ENCODE measurements at regions of chr1 and their contacts with region 1.

Region 1: GRCh38 chr1:204041232-204041767 is 31.6 kb upstream of the SOX13 start:
- DNase-seq: peak; percentile 37 to 68
- ATAC-seq: peak; percentile 43 to 77 (median 72)
- H3K4me3 ChIP-seq: peak overlapping the region in 1 of 10 donors; percentile 25
- H3K27ac ChIP-seq: peak overlapping the region; percentile 36 to 85 (median 65)
- H3K4me1 ChIP-seq: peaks cover 7 to 57% (median 34%) of the 10 kb centered on the region in 9 donors
- H3K27me3 ChIP-seq: no peaks in the 10 kb centered on the region
- CTCF ChIP-seq: no peak

Region 2: GRCh38 chr1:203968728-203969127 is 72.6 kb before region 1 on chr1:
- intact Hi-C with region 1: loop called in 1 of 10 experiments (anchors 1 kb)
- DNase-seq: peak in 1 of 2 donors; percentile 57
- ATAC-seq: peak in 7 of 8 donors; percentile 61 to 82 (median 72)
- H3K4me3 ChIP-seq: no peak overlapping the region
- H3K27ac ChIP-seq: peak overlapping the region in 1 of 10 donors; percentile 8
- H3K4me1 ChIP-seq: peaks cover 0 to 20% (median 9%) of the 10 kb centered on the region in 9 donors
- H3K27me3 ChIP-seq: no peaks in the 10 kb centered on the region
- CTCF ChIP-seq: no peak

Region 3: DNA sequence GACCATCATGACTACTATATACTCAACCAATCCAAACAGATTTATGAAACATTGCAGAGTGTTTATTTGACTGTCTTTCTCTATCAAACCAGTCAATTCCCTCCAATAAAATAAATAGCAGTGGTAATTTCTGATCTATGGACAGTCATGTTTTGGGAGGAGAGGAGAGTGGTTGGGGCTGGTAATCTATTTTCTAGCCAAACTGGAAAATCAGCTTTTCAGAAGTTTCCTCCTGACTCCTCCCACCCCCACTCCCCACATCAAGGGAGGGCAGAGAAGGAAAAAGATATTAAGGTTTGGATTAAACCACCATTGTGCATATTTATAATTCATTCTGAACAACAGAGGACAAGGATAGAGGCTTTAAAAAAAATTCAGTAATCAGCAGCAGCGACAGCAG is 37.8 kb before region 1 on chr1:
- intact Hi-C with region 1: loop called in 1 of 10 experiments (anchors 5 kb)
- DNase-seq: no peak
- ATAC-seq: no peak
- H3K4me3 ChIP-seq: no peak overlapping the region
- H3K27ac ChIP-seq: no peak overlapping the region
- H3K4me1 ChIP-seq: no peaks in the 10 kb centered on the region
- H3K27me3 ChIP-seq: no peaks in the 10 kb centered on the region
- CTCF ChIP-seq: no peak

Region 4: DNA sequence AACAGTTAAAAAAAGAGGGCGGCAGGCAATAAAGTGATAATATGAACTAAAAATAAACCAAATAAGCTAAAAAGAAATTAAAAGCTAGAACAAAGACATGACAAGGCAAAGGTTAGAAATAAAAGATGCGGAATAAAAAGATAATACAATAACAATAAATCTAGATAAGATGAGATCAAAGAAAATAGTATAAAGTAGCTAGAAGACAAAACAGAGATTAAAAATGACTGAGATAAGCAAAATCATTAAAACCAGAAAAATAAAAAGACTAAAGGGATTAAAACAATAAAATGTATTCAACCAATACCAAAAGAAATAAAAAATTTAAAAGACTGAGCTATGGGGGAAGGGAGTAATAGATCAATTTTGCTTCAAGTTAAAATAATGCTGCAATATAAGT is 20.8 kb after region 1 on chr1:
- intact Hi-C with region 1: loop called in 1 of 10 experiments (anchors 2 kb)
- DNase-seq: no peak
- ATAC-seq: no peak
- H3K4me3 ChIP-seq: no peak overlapping the region
- H3K27ac ChIP-seq: no peak overlapping the region
- H3K4me1 ChIP-seq: peaks cover 0 to 20% (median 14%) of the 10 kb centered on the region in 9 donors
- H3K27me3 ChIP-seq: no peaks in the 10 kb centered on the region
- CTCF ChIP-seq: no peak

Region 5: DNA sequence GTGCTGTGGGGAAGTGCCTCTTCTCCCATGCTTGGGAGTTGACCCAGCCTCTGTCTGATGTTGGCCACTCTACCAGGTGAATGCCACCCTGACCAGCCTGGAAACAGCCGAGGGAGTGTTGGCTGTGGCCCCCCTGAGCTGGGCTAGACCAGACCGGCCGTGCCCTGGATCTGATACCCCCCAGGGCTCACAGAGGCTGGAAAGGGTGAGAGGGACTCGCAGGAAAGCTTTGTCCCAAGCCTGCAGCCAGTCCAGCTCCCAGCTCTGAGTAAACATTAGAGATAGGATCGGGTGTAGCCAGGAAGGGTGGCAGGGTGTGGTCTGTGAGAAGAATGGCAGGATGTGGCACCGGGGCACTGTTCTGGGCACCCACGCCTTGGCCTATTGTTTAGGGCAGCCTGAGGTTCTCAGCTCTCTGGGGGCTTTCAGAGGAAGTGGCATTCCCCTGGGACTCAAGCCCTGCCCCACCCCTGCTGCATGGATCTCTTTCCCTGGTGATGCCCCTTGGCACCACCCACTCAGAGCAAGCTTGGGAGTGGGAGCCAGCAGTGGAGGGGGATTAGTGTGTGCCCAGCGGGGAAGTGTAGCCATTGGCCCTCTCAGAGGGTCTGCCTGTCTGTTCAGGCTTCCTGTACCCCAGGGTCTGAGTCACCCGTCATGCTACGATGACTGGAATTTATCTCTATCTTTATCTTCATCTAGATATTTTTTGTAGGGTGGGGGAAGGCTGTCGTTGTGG is 63.0 kb after region 1 on chr1:
- intact Hi-C with region 1: loop called in 1 of 10 experiments (anchors 2 kb)
- DNase-seq: peak; percentile 32 to 54
- ATAC-seq: peak in 7 of 8 donors; percentile 40 to 80 (median 53)
- H3K4me3 ChIP-seq: peak overlapping the region in 1 of 10 donors; percentile 7
- H3K27ac ChIP-seq: peak overlapping the region; percentile 18 to 88 (median 68)
- H3K4me1 ChIP-seq: peaks cover 18 to 85% (median 55%) of the 10 kb centered on the region in 9 donors
- H3K27me3 ChIP-seq: no peaks in the 10 kb centered on the region
- CTCF ChIP-seq: no peak